WTC11 (cell line): ENCODE measurements at regions of chr12 and their contacts with region 1.

Region 1: DNA sequence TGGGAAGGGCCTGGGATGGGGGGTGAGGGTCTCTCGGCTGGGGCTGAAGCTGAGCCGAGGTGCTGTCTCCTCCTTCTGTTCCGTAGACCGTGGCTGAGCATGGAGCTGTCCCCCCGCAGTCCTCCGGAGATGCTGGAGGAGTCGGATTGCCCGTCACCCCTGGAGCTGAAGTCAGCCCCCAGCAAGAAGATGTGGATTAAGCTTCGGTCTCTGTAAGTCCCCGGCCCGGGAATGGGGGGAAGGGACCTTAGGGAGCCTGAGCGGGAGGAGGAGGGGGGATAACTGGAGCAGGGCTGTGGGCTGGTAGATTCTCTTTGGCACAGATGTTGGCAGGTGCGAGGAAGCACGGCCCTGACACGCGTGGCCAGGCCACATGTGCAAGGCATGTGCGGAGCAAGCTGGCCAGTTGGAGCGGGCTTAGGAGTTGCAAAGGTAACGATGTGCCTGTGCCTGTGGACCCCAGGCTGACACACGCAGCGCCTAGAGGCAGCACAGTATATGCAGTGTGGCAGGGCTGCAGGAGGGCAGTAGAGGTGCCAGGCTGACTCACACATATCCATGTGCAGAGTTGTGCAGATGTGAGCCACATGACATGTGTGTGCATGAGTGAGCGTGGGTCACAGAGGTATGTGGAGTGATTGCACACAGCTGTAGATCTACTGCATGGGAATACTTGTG is 512 bp downstream of the PDE1B start:
- DNase-seq: peak; percentile 42
- ATAC-seq: peak; percentile 69
- H3K4me3 Mint-ChIP-seq: peak overlapping the region; percentile 74
- H3K27ac Mint-ChIP-seq: no peak overlapping the region
- H3K4me1 Mint-ChIP-seq: peaks cover 27% of the 10 kb centered on the region
- H3K27me3 Mint-ChIP-seq: no peaks in the 10 kb centered on the region; the same call in 1 of the 2 replicates
- CTCF ChIP-seq: no peak

Region 2: DNA sequence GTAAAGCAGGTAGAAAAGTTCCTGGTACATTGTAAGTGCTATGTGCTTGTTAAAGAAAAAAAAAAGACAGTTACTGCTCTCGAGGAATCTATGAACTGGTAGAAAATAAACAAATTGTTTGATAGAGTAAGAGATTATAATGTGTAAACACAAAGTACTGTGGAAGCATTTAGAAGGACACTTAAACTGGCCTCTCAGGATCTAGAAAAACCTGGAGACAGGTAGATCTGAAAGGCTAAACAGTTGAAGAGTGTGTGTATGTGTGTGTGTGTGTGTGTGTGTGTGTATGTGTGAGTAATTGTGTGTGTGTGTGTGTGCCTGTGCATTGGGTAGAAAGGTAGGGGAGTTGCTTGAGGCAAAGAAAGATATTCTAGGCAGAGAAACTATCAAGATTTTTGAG is 37.4 kb before region 1 on chr12:
- CTCF ChIA-PET with region 1: no interaction called
- POLR2A ChIA-PET with region 1: no interaction called
- DNase-seq: no peak
- ATAC-seq: no peak
- H3K4me3 Mint-ChIP-seq: no peak overlapping the region
- H3K27ac Mint-ChIP-seq: no peak overlapping the region
- H3K4me1 Mint-ChIP-seq: peaks cover 8% of the 10 kb centered on the region
- H3K27me3 Mint-ChIP-seq: peaks cover 7% of the 10 kb centered on the region
- CTCF ChIP-seq: no peak

Region 3: DNA sequence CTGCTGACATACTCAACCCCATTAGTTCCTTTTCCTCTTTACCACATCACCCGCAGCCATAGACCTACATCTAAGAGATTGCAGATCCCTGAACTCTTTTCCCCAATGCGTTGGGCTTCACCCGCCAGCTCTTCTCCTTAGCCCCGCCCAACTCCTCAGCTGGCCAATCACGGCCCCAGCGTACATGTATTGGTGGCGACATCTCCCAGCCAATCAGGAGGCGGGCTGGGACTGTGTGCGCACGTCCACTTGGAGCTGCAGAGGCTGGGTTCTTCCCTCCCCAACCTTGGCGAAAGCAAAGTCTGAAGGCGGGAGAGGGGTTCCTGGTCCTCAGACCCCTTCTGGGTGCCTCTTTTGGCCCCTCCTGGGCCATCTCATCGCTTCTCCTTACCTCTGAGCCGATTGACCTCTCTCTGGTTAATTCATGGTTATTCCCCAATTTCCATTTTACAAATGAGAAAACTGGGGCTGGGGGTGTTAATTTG is 10.5 kb after region 1 on chr12:
- CTCF ChIA-PET with region 1: interaction called, 19 read pairs
- POLR2A ChIA-PET with region 1: interaction called, 3 read pairs
- DNase-seq: peak; percentile 91
- ATAC-seq: peak; percentile 97
- H3K4me3 Mint-ChIP-seq: peak overlapping the region; percentile 67
- H3K27ac Mint-ChIP-seq: no peak overlapping the region
- H3K4me1 Mint-ChIP-seq: peaks cover 31% of the 10 kb centered on the region
- H3K27me3 Mint-ChIP-seq: peaks cover 63% of the 10 kb centered on the region
- CTCF ChIP-seq: no peak

Region 4: DNA sequence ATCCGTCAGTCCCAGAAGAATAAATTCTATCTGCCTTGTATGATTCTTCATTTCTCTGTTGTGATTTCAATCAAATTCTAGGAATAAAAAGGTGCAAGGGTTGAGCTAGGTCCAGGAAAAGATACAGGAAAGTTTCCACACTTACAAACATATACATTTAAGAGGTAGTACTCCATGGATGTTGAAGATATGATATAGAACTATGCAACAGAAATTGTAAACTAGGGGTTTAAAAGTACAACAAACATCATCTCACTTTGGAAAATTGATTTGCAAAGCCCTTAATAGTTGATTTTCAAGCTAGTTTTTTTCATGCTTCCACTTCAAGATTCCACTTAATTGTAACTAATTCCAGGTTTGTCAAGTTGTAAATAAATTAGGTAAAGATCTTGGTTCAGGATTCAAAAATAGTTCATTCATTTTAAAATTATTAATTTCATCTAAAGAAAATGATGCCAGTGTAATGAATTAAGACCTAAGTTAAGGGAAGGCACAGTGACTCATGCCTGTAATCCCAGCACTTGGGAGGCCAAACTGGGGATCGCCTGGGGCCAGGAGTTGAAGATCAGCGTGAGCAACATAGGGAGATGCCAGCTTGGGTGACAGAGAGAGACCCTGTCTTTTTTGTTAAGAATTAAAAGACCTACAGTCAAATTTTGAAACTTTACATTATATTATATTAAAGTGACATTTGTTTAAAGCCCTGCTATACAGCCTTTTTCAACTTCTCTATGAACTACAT is 920.3 kb after region 1 on chr12 and contains the start of gene OR6C70:
- CTCF ChIA-PET with region 1: no interaction called
- POLR2A ChIA-PET with region 1: interaction called, 11 read pairs
- DNase-seq: no peak
- ATAC-seq: no peak
- H3K4me3 Mint-ChIP-seq: no peak within 1 kb of the TSS
- H3K27ac Mint-ChIP-seq: no peak within 1 kb of the TSS
- H3K4me1 Mint-ChIP-seq: peaks cover 9% of the 10 kb centered on the region
- H3K27me3 Mint-ChIP-seq: no peaks in the 10 kb centered on the region
- CTCF ChIP-seq: no peak
- total RNA-seq, gene OR6C70: not detected in 3 replicates